ENCODE measurements at regions of chr9 and their contacts with region 1.

Region 1: GRCh38 chr9:130940693-130941576 is 1.9 kb upstream of the FIBCD1 start:
- DNase-seq: peak; percentile 64 to 87
- ATAC-seq: peak; percentile 75
- H3K4me3 ChIP-seq: no peak overlapping the region
- H3K27ac ChIP-seq: no peak overlapping the region
- H3K4me1 ChIP-seq: no peaks in the 10 kb centered on the region
- H3K27me3 ChIP-seq: no peaks in the 10 kb centered on the region

Region 2: DNA sequence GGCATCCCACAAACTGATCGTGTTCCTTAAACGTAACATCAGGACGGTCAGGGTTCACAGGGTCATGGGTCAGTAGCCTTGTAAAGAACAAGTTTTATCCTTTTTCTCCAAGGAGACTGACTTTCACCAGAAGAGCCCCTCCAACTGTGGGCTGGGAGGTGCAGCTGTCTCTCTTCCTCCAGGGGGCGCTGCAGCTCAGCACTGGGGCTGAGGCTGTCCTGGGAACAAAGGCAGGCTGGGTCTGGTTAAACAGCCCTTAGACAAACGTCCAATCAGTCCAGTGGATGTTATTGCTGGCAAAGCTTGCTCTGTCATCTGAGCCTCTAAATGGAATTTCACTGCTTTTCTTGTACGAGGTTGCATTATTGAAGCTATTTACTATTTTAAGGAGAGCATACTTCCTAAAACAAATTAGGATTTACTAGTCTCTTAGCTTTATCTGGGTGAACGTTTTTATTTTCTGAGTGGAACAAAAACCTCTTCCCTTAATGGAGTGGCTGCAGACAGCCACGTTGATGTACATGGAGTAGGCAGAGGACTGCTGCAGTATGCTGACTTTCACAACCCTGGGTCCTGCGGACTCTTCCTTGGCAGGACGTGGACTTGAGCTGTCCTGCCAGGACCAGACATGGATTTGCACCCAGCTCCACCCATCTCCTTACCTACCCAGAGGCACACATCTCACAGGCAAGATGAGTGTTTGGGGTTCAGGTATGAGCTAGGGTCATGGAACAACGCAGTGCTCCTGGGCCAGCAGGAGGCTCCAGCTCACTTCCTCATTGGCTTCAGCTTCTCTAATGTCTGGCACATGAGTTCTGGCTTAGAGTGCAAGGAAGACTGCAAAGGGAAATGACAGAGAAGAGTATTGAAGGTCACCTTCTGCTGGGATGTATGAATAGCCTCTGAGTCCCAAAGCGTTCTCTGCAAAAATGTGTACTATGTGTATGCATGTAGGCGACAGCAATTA is 239.6 kb before region 1 on chr9:
- intact Hi-C with region 1: loop called (anchors 2 to 5 kb)
- DNase-seq: peak; percentile 87 to 92
- ATAC-seq: peak; percentile 94
- H3K4me3 ChIP-seq: no peak overlapping the region
- H3K27ac ChIP-seq: peak overlapping the region in 1 of 2 donors; percentile 11
- H3K4me1 ChIP-seq: no peaks in the 10 kb centered on the region
- H3K27me3 ChIP-seq: no peaks in the 10 kb centered on the region

Region 3: DNA sequence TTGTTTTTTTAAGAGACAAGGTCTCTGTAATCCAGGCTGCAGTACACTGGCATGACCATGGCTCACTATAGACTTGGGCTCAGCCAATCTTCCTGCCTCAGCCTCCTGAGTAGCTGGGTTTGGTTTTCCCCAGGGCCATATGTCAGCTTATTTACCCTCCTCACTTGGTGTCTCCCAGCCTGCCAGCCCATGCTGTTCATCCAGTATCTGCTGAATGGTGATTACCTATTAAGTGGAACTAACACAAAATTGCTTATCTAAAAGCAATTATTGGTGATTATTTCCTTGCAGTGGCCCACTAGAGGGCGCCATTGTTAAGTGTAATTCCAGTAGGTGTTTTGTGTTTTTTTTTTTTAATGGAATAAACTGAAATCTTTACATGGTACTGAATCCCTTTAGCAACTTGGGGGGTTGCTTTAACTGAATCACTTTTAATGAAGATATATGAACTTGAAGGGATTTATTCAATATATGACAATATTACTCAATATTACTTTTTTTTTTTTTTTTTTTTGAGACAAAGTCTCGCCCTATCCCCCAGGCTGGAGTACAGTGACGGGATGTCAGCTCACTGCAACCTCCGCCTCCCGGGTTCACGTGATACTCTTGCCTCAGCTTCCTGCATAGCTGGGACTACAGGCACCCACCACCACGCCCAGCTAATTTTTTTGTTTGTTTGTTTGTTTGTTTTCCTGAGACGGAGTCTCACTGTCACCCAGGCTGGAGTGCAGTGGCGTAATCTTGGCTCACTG is 233.5 kb before region 1 on chr9:
- intact Hi-C with region 1: loop called (anchors 2 to 5 kb)
- DNase-seq: peak; percentile 71 to 83
- ATAC-seq: no peak
- H3K4me3 ChIP-seq: no peak overlapping the region
- H3K27ac ChIP-seq: no peak overlapping the region
- H3K4me1 ChIP-seq: no peaks in the 10 kb centered on the region
- H3K27me3 ChIP-seq: no peaks in the 10 kb centered on the region

Region 4: DNA sequence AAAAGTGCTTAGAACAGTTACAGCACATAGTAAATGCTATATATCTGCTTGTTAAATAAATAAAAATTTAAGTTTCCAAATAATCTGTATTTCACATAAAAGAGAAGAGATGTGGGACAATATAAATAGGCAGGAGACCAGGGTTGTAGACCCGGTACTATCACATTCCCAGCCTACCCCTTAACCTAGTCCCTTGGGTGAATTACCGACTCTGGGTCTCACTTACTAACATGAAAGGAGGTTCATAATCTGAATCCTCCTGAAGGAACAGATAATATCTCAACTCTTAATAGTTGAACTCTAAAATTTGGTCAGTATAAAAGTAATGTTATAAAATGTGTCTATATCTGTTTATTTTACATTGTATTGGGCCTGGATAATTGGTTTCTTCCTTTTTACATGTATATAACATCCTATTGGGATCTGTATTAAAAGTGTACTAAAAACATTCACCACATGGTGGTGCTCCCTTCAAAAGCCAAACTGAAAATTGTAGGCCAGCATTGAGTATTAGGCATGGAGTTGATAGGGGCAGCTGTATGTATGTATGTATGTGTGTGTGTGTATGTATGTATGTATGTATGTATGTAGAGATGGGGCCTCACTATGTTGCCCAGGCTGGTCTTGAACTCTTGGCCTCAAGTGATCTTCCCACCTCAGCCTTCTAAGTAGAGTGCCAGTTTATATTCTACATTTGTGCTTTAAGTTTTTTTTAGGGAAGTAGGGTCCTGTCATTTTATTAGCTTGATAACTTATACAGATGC is 170.1 kb before region 1 on chr9:
- intact Hi-C with region 1: loop called (anchors 5 kb)
- DNase-seq: no peak
- ATAC-seq: peak; percentile 83
- H3K4me3 ChIP-seq: no peak overlapping the region
- H3K27ac ChIP-seq: no peak overlapping the region
- H3K4me1 ChIP-seq: no peaks in the 10 kb centered on the region
- H3K27me3 ChIP-seq: no peaks in the 10 kb centered on the region

Region 5: DNA sequence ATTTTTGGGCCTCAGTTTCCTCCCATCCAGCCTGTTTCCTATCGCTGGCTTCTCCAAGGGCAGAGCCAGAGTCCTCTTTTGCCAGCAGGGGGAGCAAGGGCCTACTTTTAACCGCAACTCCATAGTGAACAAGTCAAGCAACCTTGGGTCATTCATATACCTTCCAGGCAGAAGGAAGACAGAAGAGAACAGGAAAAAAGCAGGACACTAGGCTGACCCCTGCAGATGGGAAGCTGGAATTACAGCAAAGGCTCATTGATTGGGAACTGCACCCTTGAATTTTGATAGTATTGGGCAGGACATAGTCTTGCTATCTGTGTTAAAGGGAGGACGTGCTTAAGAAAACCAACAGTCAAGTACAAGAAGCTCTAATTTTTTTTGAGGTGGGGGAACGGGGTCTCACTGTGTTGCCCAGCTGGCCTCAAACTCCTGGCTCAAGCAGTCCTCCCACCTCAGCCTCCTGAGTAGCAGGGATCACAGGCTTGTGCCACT is 74.4 kb before region 1 on chr9:
- intact Hi-C with region 1: loop called (anchors 2 to 5 kb)
- DNase-seq: peak; percentile 76 to 82
- ATAC-seq: peak; percentile 54
- H3K4me3 ChIP-seq: no peak overlapping the region
- H3K27ac ChIP-seq: no peak overlapping the region
- H3K4me1 ChIP-seq: no peaks in the 10 kb centered on the region
- H3K27me3 ChIP-seq: no peaks in the 10 kb centered on the region